ENCODE measurements at regions of chr5 and their contacts with region 1.

Region 1: DNA sequence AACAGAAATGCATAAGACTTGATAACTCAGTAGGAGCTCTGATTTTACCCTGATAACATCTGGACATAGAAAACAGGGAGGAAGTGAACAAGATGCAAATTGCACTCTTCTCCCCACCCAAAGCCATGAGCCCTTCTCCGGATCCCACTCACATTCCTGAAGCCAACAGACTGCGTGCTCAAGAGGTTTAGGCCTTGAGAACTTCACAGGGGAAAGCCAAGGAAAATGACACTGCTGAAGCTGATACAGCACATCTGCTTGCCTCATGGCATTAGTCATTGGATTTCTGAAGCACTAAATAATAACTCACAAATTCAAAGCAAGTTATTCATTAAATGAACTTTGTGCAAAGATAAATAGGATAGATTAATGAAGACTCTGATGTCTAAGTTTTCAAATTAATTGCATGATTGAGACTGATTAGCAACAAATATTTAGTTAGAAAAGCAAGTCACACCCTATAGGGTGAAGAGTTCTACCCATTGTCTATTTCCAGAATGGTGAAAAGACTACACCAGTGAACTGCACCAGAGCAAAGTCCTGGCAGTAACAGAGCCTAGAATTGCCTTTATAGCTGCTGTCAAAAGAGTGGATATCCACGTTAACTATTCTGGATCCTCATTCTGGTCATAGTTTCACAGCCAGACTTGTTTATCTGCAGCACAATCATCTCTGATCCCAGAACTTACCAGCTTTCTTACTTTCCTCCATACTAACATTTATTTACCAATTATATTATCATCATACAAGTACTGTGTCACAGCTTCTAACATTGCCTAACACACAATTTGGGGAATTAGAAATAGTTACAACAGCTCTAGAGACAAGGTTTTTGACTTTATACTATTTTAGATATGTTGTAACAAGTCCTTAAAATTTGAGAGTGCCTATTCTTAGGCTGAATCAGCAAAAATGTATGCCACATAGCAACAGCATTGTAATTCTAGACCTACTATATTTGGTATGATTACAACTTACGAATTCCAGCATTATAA is 432.1 kb upstream of the RGMB start:
- DNase-seq: no peak
- H3K4me3 Mint-ChIP-seq: no peak overlapping the region
- H3K27ac Mint-ChIP-seq: no peak overlapping the region
- H3K4me1 Mint-ChIP-seq: no peaks in the 10 kb centered on the region
- H3K27me3 Mint-ChIP-seq: no peaks in the 10 kb centered on the region
- CTCF ChIP-seq: no peak

Region 2: DNA sequence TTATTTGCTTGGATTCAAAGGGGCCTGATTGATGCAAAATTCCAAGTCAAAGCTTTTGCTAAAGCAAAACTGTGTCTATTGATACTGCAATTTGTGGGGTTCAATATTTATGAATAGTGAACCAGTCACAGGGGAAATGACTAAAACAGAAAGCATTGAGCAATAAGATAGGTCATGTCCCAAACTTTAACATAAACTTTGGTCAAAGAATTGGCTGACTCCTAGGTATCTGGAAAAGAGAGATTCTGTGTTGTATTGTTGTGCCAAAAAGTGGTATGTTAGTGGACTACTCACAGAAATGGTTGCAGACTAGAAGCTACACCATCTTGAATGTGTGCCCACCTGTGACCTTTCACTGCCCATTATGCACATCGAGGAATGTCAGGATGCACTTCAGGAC is 153.4 kb before region 1 on chr5:
- CTCF ChIA-PET with region 1: no interaction called
- intact Hi-C with region 1: no loop called
- DNase-seq: no peak
- H3K4me3 Mint-ChIP-seq: no peak overlapping the region
- H3K27ac Mint-ChIP-seq: no peak overlapping the region
- H3K4me1 Mint-ChIP-seq: no peaks in the 10 kb centered on the region
- H3K27me3 Mint-ChIP-seq: no peaks in the 10 kb centered on the region
- CTCF ChIP-seq: no peak

Region 3: GRCh38 chr5:98320343-98320742 is 21.0 kb before region 1 on chr5:
- CTCF ChIA-PET with region 1: no interaction called
- intact Hi-C with region 1: loop called (anchors 1 kb)
- DNase-seq: no peak
- H3K4me3 Mint-ChIP-seq: no peak overlapping the region
- H3K27ac Mint-ChIP-seq: no peak overlapping the region
- H3K4me1 Mint-ChIP-seq: peaks cover 3% of the 10 kb centered on the region
- H3K27me3 Mint-ChIP-seq: no peaks in the 10 kb centered on the region
- CTCF ChIP-seq: no peak

Region 4: GRCh38 chr5:98397081-98397480 is 55.7 kb after region 1 on chr5:
- CTCF ChIA-PET with region 1: no interaction called
- intact Hi-C with region 1: no loop called
- DNase-seq: no peak
- H3K4me3 Mint-ChIP-seq: no peak overlapping the region
- H3K27ac Mint-ChIP-seq: no peak overlapping the region
- H3K4me1 Mint-ChIP-seq: no peaks in the 10 kb centered on the region
- H3K27me3 Mint-ChIP-seq: no peaks in the 10 kb centered on the region
- CTCF ChIP-seq: no peak

Region 5: DNA sequence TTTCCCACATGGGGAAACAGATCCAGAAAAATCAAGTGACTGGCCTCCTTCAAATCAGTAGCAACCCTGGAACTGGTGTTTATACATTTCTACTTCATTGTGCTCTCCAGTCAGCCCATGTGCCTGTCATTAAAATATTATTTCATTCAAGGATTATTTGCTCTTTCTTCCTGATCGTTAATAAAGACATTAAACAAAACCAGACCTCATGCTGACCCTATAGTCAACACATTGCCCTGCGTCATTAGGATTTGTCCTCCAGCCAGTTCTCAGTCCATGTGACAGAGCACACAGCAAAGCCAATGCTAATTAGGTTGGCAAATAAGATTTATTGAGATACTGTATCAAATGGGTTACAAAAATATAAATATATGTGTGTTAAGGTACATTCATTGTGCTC is 222.5 kb after region 1 on chr5:
- CTCF ChIA-PET with region 1: no interaction called
- intact Hi-C with region 1: no loop called
- DNase-seq: no peak
- H3K4me3 Mint-ChIP-seq: no peak overlapping the region
- H3K27ac Mint-ChIP-seq: no peak overlapping the region
- H3K4me1 Mint-ChIP-seq: no peaks in the 10 kb centered on the region
- H3K27me3 Mint-ChIP-seq: no peaks in the 10 kb centered on the region
- CTCF ChIP-seq: no peak